CD8-positive, alpha-beta T cell (primary cell): ENCODE measurements at regions of chr2 and their contacts with region 1.

Region 1: DNA sequence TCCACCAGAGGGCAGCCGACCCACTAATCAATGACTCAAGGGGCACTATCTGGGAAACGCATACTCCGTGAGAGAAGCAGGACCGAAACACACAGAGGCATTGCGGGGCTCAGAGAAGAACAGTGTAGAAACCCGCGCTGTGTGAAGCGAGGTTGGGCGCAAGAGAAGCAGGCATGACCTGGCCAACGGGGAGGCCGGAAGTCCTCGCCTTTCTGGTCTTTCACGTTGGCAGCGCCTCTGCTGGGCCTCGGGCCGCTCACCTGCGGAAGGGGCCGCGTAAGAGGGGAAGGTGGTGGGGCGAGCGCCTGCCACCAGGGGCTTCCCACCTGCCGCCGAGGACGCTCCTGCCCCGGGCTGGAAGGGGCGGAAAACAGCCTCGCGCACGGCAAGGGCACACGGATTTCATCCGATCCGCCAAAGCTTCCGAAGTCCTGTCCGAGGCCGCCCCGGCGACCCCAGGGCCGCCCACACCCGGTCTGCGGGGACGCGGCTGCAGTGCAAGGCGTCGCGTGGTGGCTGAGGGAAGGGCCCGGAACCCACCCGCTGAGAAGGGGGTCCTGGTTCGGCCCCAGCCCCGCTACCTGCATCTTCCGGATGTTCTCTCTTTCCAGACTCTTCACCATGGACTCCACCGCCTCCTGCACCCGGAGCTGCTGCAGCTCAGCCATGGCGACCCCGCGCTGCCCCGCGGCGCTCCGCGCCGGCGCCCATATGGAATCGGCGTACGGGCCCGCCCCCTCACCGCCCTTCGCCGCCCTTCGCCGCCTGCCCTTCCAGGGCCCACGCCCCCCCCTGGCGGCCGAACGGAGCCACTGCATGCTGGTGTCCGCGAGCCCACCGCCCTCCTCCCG is at the start of gene FAM136A:
- DNase-seq: peak; percentile 78 to 93 (median 88)
- ATAC-seq: peak; percentile 93
- H3K4me3 ChIP-seq: peak within 1 kb of the TSS; percentile 85 to 94
- H3K4me3 Mint-ChIP-seq: peak within 1 kb of the TSS; percentile 89
- H3K27ac ChIP-seq: peak within 1 kb of the TSS; percentile 77 to 80
- H3K27ac Mint-ChIP-seq: peak within 1 kb of the TSS; percentile 93
- H3K4me1 ChIP-seq: peaks cover 16% of the 10 kb centered on the region
- H3K4me1 Mint-ChIP-seq: peaks cover 29% of the 10 kb centered on the region
- H3K27me3 ChIP-seq: no peaks in the 10 kb centered on the region
- H3K27me3 Mint-ChIP-seq: no peaks in the 10 kb centered on the region
- CTCF ChIP-seq: peak; percentile 87
- total RNA-seq, gene FAM136A: 30.8 to 30.9 TPM

Region 2: GRCh38 chr2:68467077-68467960 is 1834.2 kb before region 1 on chr2 and contains the starts of genes APLF and FBXO48:
- CTCF ChIA-PET with region 1: no interaction called
- POLR2A ChIA-PET with region 1: no interaction called
- intact Hi-C with region 1: loop called in 1 of 2 experiments (anchors 5 kb)
- DNase-seq: peak; percentile 96 to 99 (median 98)
- ATAC-seq: peak; percentile 87
- H3K4me3 ChIP-seq: peak within 1 kb of the TSS; percentile 83 to 88
- H3K4me3 Mint-ChIP-seq: peak within 1 kb of the TSS; percentile 96
- H3K27ac ChIP-seq: peak within 1 kb of the TSS; percentile 82 to 89
- H3K27ac Mint-ChIP-seq: peak within 1 kb of the TSS; percentile 97
- H3K4me1 ChIP-seq: peaks cover 26% of the 10 kb centered on the region
- H3K4me1 Mint-ChIP-seq: peaks cover 44% of the 10 kb centered on the region
- H3K27me3 ChIP-seq: no peaks in the 10 kb centered on the region
- H3K27me3 Mint-ChIP-seq: no peaks in the 10 kb centered on the region
- CTCF ChIP-seq: no peak
- total RNA-seq, gene APLF: 4.1 to 4.2 TPM
- total RNA-seq, gene FBXO48: 0.22 to 0.30 TPM

Region 3: GRCh38 chr2:69829256-69830046 is 472.1 kb before region 1 on chr2 and contains the start of gene GMCL1:
- CTCF ChIA-PET with region 1: no interaction called
- POLR2A ChIA-PET with region 1: no interaction called
- intact Hi-C with region 1: loop called in 1 of 2 experiments (anchors 5 kb)
- DNase-seq: peak; percentile 96 to 100 (median 99)
- ATAC-seq: peak; percentile 94
- H3K4me3 ChIP-seq: peak within 1 kb of the TSS; percentile 70 to 75
- H3K4me3 Mint-ChIP-seq: peak within 1 kb of the TSS; percentile 96
- H3K27ac ChIP-seq: peak within 1 kb of the TSS; percentile 89 to 95
- H3K27ac Mint-ChIP-seq: peak within 1 kb of the TSS; percentile 96
- H3K4me1 ChIP-seq: peaks cover 36% of the 10 kb centered on the region
- H3K4me1 Mint-ChIP-seq: peaks cover 54% of the 10 kb centered on the region
- H3K27me3 ChIP-seq: no peaks in the 10 kb centered on the region
- H3K27me3 Mint-ChIP-seq: no peaks in the 10 kb centered on the region
- CTCF ChIP-seq: no peak
- total RNA-seq, gene GMCL1: 37.1 to 41.4 TPM

Region 4: DNA sequence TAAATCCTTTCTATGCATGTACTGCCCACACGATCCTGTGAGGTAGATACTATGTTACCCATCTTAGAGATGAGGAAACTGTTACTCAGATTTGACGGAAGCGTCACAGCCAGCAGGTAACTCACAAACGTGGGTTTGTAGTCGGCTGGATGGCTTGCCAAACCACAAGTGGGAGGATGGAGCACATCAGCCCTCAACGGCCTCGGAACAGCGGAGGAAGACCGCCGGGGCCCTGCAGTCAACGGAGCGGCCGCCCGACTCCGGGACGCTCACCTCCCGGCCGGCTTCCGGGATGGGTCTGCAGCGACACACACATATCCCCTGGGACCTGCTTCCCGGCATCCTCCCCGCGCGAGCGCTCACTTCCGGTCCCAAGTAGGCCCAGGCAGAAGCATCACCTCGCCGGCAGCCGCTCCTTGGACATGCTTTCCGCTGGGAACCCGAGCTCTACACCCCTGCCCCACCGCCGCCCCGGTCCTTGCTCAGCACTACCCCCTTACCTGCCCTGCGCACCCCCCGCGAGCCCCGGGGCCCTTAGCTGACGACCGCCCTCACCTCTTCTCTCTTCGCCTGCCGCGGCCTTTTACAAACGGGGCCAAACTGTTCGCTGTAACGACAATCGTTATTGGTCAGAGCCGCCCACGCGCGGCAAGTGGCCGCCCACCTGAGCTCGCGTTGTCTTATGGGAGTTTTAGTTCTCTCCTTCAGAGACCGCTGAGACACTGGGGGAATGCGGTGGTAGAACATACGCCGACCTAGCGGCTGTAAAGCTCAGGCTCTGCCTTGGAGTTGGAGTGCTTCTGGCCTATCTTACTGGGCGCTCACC is 110.9 kb before region 1 on chr2 and contains the start of gene C2orf42:
- CTCF ChIA-PET with region 1: no interaction called
- POLR2A ChIA-PET with region 1: no interaction called
- intact Hi-C with region 1: loop called in 1 of 2 experiments (anchors 1 kb)
- DNase-seq: peak; percentile 88 to 98 (median 95)
- ATAC-seq: peak; percentile 83
- H3K4me3 ChIP-seq: peak within 1 kb of the TSS; percentile 82 to 95
- H3K4me3 Mint-ChIP-seq: peak within 1 kb of the TSS; percentile 100
- H3K27ac ChIP-seq: peak within 1 kb of the TSS; percentile 88 to 99
- H3K27ac Mint-ChIP-seq: peak within 1 kb of the TSS; percentile 100
- H3K4me1 ChIP-seq: peaks cover 5% of the 10 kb centered on the region
- H3K4me1 Mint-ChIP-seq: peaks cover 24% of the 10 kb centered on the region
- H3K27me3 ChIP-seq: no peaks in the 10 kb centered on the region
- H3K27me3 Mint-ChIP-seq: peaks cover 2% of the 10 kb centered on the region
- CTCF ChIP-seq: no peak
- total RNA-seq, gene C2orf42: 14.7 to 16.8 TPM

Region 5: DNA sequence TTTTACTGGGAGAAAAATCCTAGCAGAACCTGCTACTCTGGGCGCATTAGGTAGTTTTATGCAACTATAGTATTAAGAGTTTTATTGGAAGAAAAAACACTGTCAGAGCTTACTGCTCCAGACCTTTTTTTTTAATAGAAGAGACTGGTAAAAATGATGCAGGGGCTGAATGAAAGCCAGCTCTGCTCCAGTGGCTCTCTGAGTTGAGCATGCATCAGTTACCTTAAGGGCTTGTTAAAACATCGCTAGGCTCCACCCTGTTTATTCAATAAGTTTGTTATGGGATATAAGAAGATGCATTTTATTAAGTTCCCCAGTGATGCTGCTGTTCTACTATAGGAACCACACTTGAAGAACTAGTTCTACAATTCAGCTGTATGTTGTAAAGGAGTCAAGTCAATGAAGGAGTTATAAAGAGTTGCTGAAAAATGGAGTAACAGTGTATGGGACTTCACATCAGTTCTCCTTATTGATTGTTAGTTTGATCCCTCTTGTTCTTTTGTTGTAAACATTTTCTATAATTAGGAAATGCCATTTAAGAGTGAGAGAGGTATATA is 21.2 kb before region 1 on chr2:
- CTCF ChIA-PET with region 1: no interaction called
- POLR2A ChIA-PET with region 1: no interaction called
- intact Hi-C with region 1: no loop called
- DNase-seq: no peak
- ATAC-seq: no peak
- H3K4me3 ChIP-seq: no peak overlapping the region
- H3K4me3 Mint-ChIP-seq: no peak overlapping the region
- H3K27ac ChIP-seq: no peak overlapping the region
- H3K27ac Mint-ChIP-seq: no peak overlapping the region
- H3K4me1 ChIP-seq: peaks cover 6% of the 10 kb centered on the region
- H3K4me1 Mint-ChIP-seq: peaks cover 29% of the 10 kb centered on the region
- H3K27me3 ChIP-seq: no peaks in the 10 kb centered on the region
- H3K27me3 Mint-ChIP-seq: no peaks in the 10 kb centered on the region
- CTCF ChIP-seq: no peak

Region 6: DNA sequence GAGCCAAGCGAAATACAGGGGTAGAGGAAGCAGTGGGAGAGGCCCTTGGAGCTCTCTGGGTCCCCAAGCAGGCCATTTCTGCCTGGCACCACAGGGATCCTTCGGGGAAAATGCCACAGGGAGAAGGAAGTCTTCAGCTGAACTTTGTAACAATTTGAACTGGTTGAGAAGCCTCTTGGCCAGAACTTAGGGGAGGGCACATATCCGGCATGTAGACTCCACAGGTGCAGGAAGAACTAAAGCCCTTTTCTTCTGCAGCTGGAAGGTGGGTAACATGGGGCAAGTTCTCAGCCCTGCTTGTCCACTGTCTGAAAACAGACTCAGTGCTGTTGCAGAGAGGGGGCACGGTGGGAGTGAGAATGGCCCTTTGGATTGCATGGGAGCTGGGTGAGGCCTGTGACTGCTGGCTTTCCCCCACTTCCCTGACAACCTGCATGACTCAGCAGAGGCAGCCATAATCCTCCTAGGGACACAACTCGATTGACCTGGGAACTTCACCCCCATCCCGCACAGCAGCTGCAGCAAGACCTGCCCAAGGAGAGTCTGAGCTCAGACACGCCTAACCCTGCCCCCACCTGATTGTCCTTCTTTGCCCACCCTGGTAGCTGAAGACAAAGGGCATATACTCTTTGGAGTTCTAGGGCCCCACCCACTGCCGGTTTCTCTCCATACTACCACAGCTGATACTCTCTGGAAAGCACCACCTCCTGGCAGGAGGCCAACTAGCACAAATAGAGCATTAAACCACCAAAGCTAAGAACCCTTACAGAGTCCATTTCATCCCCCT is 101.9 kb after region 1 on chr2:
- CTCF ChIA-PET with region 1: no interaction called
- POLR2A ChIA-PET with region 1: no interaction called
- intact Hi-C with region 1: no loop called
- DNase-seq: no peak
- ATAC-seq: no peak
- H3K4me3 ChIP-seq: no peak overlapping the region
- H3K4me3 Mint-ChIP-seq: no peak overlapping the region
- H3K27ac ChIP-seq: no peak overlapping the region
- H3K27ac Mint-ChIP-seq: no peak overlapping the region
- H3K4me1 ChIP-seq: no peaks in the 10 kb centered on the region
- H3K4me1 Mint-ChIP-seq: no peaks in the 10 kb centered on the region
- H3K27me3 ChIP-seq: no peaks in the 10 kb centered on the region
- H3K27me3 Mint-ChIP-seq: peaks cover 7% of the 10 kb centered on the region
- CTCF ChIP-seq: no peak

Region 7: GRCh38 chr2:70553584-70554337 is 252.2 kb after region 1 on chr2 and contains the start of gene TGFA:
- CTCF ChIA-PET with region 1: no interaction called
- POLR2A ChIA-PET with region 1: no interaction called
- intact Hi-C with region 1: loop called in 1 of 2 experiments (anchors 5 kb)
- DNase-seq: peak; percentile 28 to 85 (median 67)
- ATAC-seq: peak; percentile 71
- H3K4me3 ChIP-seq: peak within 1 kb of the TSS; percentile 56 to 72
- H3K4me3 Mint-ChIP-seq: peak within 1 kb of the TSS; percentile 92
- H3K27ac ChIP-seq: no peak within 1 kb of the TSS
- H3K27ac Mint-ChIP-seq: peak within 1 kb of the TSS; percentile 86
- H3K4me1 ChIP-seq: peaks cover 21% of the 10 kb centered on the region
- H3K4me1 Mint-ChIP-seq: peaks cover 29% of the 10 kb centered on the region
- H3K27me3 ChIP-seq: no peaks in the 10 kb centered on the region
- H3K27me3 Mint-ChIP-seq: peaks cover 4% of the 10 kb centered on the region
- CTCF ChIP-seq: peak; percentile 81
- total RNA-seq, gene TGFA: 0.58 to 1.0 TPM

Region 8: DNA sequence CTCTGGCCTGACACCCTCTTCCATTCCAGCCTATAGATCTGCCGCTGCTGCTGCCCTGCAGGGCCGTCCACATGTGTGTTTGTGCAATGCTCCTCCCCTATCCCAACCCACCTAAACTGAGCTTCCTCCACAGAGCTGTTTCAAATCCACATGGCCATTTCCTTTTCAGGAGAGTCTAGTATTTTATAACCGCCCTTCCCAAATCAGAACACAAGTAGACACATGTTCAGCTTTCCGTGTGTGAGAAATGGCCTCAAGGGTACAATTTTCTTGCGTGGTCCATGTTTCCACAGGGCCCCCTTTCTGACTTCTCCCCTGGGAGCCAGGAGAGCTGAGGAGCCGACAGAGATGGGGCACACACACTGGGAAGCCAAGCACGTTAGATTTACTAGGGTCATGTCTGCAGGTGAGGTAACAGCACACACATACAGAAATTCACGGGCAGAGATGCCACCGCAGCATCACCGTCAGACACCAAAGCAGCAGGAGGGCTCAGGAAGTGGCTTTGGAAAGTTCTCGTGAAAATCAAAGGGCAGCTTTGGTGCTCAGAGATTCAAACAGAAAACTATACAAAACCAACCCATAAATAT is 354.9 kb after region 1 on chr2:
- CTCF ChIA-PET with region 1: interaction called, 14 read pairs
- POLR2A ChIA-PET with region 1: no interaction called
- intact Hi-C with region 1: no loop called
- DNase-seq: peak in 7 of 9 experiments; percentile 11 to 79 (median 57)
- ATAC-seq: peak; percentile 84
- H3K4me3 ChIP-seq: no peak overlapping the region
- H3K4me3 Mint-ChIP-seq: peak overlapping the region; percentile 10
- H3K27ac ChIP-seq: peak overlapping the region in 1 of 2 experiments; percentile 13
- H3K27ac Mint-ChIP-seq: peak overlapping the region; percentile 77
- H3K4me1 ChIP-seq: peaks cover 29% of the 10 kb centered on the region
- H3K4me1 Mint-ChIP-seq: peaks cover 37% of the 10 kb centered on the region
- H3K27me3 ChIP-seq: no peaks in the 10 kb centered on the region
- H3K27me3 Mint-ChIP-seq: peaks cover 13% of the 10 kb centered on the region
- CTCF ChIP-seq: no peak

Region 9: GRCh38 chr2:70948337-70949003 is 646.9 kb after region 1 on chr2:
- CTCF ChIA-PET with region 1: interaction called, 9 read pairs
- POLR2A ChIA-PET with region 1: no interaction called
- intact Hi-C with region 1: loop called (anchors 1 kb)
- DNase-seq: peak; percentile 55 to 86 (median 79)
- ATAC-seq: peak; percentile 97
- H3K4me3 ChIP-seq: peak overlapping the region; percentile 3 to 29
- H3K4me3 Mint-ChIP-seq: peak overlapping the region; percentile 77
- H3K27ac ChIP-seq: no peak overlapping the region
- H3K27ac Mint-ChIP-seq: no peak overlapping the region
- H3K4me1 ChIP-seq: no peaks in the 10 kb centered on the region
- H3K4me1 Mint-ChIP-seq: peaks cover 13% of the 10 kb centered on the region
- H3K27me3 ChIP-seq: peaks cover 0 to under 1% of the 10 kb centered on the region in 2 experiments
- H3K27me3 Mint-ChIP-seq: peaks cover 17% of the 10 kb centered on the region
- CTCF ChIP-seq: peak; percentile 75

Region 10: GRCh38 chr2:71466303-71467173 is 1165.0 kb after region 1 on chr2:
- CTCF ChIA-PET with region 1: no interaction called
- POLR2A ChIA-PET with region 1: no interaction called
- intact Hi-C with region 1: no loop called
- DNase-seq: peak in 1 of 9 experiments; percentile 25
- ATAC-seq: no peak
- H3K4me3 ChIP-seq: peak overlapping the region; percentile 14 to 65
- H3K4me3 Mint-ChIP-seq: peak overlapping the region; percentile 76
- H3K27ac ChIP-seq: no peak overlapping the region
- H3K27ac Mint-ChIP-seq: no peak overlapping the region
- H3K4me1 ChIP-seq: no peaks in the 10 kb centered on the region
- H3K4me1 Mint-ChIP-seq: peaks cover 9% of the 10 kb centered on the region
- H3K27me3 ChIP-seq: peaks cover 4 to 12% of the 10 kb centered on the region in 2 experiments
- H3K27me3 Mint-ChIP-seq: peaks cover 30% of the 10 kb centered on the region
- CTCF ChIP-seq: no peak